CD8-positive, alpha-beta T cell (primary cell): ENCODE measurements at regions of chr1 and their contacts with region 1.

Region 1: DNA sequence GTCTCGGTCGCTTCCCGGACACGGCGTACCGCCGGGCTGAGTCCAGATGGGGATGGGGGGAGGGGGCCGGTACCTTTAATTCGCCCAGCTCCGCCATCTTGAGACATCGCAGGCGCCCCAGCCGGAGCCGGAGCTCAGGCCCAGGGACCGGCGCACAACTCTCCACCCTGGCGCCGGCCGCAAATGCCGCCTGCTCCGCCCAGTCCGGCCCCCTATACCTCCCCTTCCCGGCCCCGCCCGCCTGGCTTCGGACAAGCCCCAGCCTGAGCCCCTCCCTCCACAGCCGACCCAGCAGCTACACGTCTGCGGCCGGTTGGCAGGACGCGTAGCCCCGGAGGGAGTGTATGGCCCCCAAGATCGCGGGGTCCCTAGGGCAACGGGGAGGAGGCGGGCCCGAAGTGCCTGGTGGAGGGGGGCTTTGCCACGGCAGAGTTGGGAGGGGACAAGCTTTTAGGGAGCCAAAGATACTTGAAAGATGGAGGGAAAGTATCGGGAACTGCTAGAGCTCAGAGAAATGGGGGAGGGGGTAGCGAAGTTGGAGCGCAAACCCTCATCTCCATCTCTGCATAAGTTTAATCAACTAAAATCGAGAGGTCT is at the start of gene PIAS3:
- DNase-seq: peak; percentile 60 to 90 (median 78)
- ATAC-seq: peak; percentile 83
- H3K4me3 ChIP-seq: peak within 1 kb of the TSS; percentile 99 to 100
- H3K4me3 Mint-ChIP-seq: peak within 1 kb of the TSS; percentile 97
- H3K27ac ChIP-seq: peak within 1 kb of the TSS; percentile 64 to 65
- H3K27ac Mint-ChIP-seq: peak within 1 kb of the TSS; percentile 87
- H3K4me1 ChIP-seq: peaks cover 10% of the 10 kb centered on the region
- H3K4me1 Mint-ChIP-seq: peaks cover 17% of the 10 kb centered on the region
- H3K27me3 ChIP-seq: no peaks in the 10 kb centered on the region
- H3K27me3 Mint-ChIP-seq: no peaks in the 10 kb centered on the region
- CTCF ChIP-seq: no peak
- total RNA-seq, gene PIAS3: 16.3 to 16.6 TPM

Region 2: DNA sequence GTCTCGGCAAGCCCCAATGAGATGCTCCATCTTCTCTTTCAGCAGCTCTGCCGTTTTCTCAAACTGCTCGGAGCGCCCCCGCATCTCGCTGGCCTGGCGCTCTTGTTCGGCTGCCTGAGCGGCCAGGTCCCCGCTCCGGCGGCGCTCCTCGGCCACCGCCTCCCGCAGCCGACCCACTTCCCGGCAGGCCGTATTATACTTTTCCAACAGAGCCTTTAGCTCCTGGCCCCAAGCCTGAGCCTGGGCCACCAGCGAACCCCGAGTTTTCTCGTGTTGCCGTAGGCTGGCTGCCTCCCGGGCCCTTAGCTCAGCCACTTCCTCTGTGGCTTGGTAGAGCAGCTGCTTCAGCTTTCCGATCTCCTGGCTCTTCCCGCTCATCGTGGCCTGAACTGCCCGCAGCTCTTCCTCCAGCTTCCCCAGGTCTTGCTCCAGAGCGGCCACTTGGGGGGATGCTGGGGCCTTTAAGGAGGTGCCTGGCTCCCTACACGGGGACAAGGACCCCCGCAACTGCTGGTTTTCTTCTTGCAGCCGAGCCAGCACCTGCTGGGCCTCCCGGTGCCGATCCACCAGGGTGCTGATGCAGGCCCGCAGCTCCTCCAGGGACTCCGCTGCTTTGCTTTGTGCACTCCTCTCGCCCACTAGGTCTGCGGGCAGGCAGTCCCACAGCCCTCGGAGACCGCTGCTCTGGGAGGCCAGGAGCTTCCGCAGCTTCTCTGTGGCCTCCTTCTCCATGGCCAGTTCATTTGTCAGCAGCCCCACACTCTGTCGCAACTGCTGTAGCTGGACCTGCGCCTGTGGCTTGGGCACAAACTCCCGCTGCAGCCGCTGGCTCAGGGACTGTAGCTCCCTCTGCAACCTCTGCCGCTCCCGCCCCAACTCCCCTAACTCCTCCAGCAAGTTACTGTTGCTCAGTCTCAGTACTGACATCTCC is 13.3 kb after region 1 on chr1:
- CTCF ChIA-PET with region 1: interaction called, 8 read pairs
- POLR2A ChIA-PET with region 1: interaction called, 29 read pairs
- intact Hi-C with region 1: no loop called
- DNase-seq: peak in 8 of 9 experiments; percentile 12 to 75 (median 42)
- ATAC-seq: peak; percentile 76
- H3K4me3 ChIP-seq: peak overlapping the region; percentile 49 to 59
- H3K4me3 Mint-ChIP-seq: peak overlapping the region; percentile 81
- H3K27ac ChIP-seq: peak overlapping the region; percentile 1 to 38
- H3K27ac Mint-ChIP-seq: peak overlapping the region; percentile 69
- H3K4me1 ChIP-seq: peaks cover 13% of the 10 kb centered on the region
- H3K4me1 Mint-ChIP-seq: peaks cover 15% of the 10 kb centered on the region
- H3K27me3 ChIP-seq: no peaks in the 10 kb centered on the region
- H3K27me3 Mint-ChIP-seq: peaks cover 2% of the 10 kb centered on the region
- CTCF ChIP-seq: no peak

Region 3: DNA sequence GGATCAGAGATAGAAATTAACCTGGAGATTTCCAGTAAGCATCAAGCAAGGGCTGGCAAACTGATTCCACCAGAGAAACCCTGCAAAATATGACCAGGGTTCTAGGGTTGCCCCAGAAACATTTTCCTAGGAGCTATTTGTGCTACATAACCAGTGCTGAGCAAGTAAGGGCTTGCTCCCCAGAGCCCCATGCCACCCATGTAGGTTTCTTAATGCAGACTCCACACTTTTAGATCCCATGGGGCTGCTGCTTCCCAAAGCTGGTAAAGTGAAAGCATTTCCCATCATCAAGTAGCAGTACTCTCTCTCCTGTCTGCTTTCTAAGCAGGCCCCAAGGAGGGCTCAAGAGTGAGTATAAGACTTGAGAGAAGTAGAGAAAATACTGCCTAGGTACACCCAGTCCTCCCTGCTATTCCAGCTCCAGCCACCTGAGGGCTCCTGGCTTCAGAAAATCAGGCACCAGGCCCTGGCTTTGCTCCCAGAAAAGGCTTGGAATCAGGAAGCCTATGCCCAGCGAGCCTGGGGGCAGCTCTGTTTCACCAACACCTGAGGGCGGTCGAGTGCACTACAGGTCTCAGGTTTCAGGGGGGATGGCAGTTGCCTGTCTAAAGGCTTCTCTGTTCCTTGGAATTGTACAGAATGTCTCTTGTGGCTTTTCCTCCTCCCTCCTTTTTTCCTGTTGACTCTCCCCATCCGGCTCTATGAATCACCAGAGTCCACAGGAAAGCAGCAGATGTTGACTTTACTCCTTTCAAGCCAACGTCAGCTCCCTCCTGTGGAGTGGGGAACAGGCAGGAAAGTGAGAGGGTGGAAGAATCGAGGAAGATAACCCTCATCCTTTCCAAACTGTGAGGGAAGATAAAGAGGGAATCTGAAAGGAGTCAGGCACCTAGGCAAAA is 32.8 kb after region 1 on chr1:
- CTCF ChIA-PET with region 1: interaction called, 16 read pairs
- POLR2A ChIA-PET with region 1: interaction called, 21 read pairs
- intact Hi-C with region 1: no loop called
- DNase-seq: peak in 8 of 9 experiments; percentile 16 to 65 (median 54)
- ATAC-seq: peak; percentile 85
- H3K4me3 ChIP-seq: no peak overlapping the region
- H3K4me3 Mint-ChIP-seq: no peak overlapping the region
- H3K27ac ChIP-seq: no peak overlapping the region
- H3K27ac Mint-ChIP-seq: no peak overlapping the region
- H3K4me1 ChIP-seq: no peaks in the 10 kb centered on the region
- H3K4me1 Mint-ChIP-seq: peaks cover under 1% of the 10 kb centered on the region
- H3K27me3 ChIP-seq: no peaks in the 10 kb centered on the region
- H3K27me3 Mint-ChIP-seq: no peaks in the 10 kb centered on the region
- CTCF ChIP-seq: peak; percentile 69

Region 4: DNA sequence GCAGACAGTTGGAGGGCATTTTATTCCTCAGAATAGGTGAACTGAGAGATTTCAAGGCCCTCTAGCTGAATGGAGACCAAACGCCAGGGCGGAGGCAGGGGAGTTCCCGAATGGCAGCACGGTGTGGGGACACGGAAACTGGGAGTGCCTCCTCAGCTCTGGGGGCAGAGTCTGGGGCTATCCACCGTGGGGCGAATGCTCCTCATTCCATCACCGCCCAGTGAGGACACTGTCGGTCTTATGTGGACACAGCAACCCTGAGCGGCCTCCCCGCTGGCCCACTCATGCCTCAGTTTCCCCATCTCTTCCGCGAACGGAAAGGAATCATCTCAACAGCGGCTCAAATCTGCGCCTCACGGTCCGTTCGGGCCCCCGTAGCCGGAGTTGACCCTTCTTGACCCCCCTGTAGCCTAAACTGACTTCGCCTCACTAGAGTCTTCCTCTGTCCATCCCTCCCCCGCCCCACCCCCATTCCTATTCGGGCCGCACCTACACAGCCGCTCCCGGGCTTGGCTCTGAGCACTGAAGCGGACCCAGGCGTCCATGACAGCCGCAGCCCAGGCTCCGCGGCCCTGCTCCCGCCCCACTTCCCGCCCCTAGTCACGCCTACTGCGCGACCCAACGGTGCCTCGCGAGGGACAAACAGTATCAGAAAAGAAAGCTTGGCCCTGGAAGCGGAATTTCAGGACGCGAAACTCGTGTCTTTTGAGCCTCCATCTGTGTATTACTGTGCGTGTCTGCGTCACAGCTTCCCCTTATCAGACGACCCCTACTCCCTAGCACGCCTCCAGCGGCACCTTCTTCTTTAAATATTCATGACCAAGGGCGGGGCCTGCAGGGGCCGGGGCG is 59.4 kb after region 1 on chr1 and contains the start of gene PEX11B:
- CTCF ChIA-PET with region 1: interaction called, 3 read pairs
- POLR2A ChIA-PET with region 1: interaction called, 13 read pairs
- intact Hi-C with region 1: loop called (anchors 1 kb)
- DNase-seq: peak; percentile 87 to 96 (median 93)
- ATAC-seq: peak; percentile 91
- H3K4me3 ChIP-seq: peak within 1 kb of the TSS; percentile 88 to 96
- H3K4me3 Mint-ChIP-seq: peak within 1 kb of the TSS; percentile 90
- H3K27ac ChIP-seq: peak within 1 kb of the TSS; percentile 74 to 86
- H3K27ac Mint-ChIP-seq: peak within 1 kb of the TSS; percentile 96
- H3K4me1 ChIP-seq: peaks cover 24% of the 10 kb centered on the region
- H3K4me1 Mint-ChIP-seq: peaks cover 43% of the 10 kb centered on the region
- H3K27me3 ChIP-seq: no peaks in the 10 kb centered on the region
- H3K27me3 Mint-ChIP-seq: no peaks in the 10 kb centered on the region
- CTCF ChIP-seq: no peak
- total RNA-seq, gene PEX11B: 11.8 TPM

Region 5: GRCh38 chr1:145963995-145964901 is 105.3 kb after region 1 on chr1 and contains the starts of genes ANKRD34A and POLR3GL:
- CTCF ChIA-PET with region 1: interaction called, 4 read pairs
- POLR2A ChIA-PET with region 1: interaction called, 15 read pairs
- intact Hi-C with region 1: loop called (anchors 1 to 2 kb)
- DNase-seq: peak; percentile 77 to 95 (median 91)
- ATAC-seq: peak; percentile 88
- H3K4me3 ChIP-seq: peak within 1 kb of the TSS; percentile 87 to 92
- H3K4me3 Mint-ChIP-seq: peak within 1 kb of the TSS; percentile 98
- H3K27ac ChIP-seq: peak within 1 kb of the TSS; percentile 71 to 78
- H3K27ac Mint-ChIP-seq: peak within 1 kb of the TSS; percentile 98
- H3K4me1 ChIP-seq: peaks cover 32% of the 10 kb centered on the region
- H3K4me1 Mint-ChIP-seq: peaks cover 58% of the 10 kb centered on the region
- H3K27me3 ChIP-seq: no peaks in the 10 kb centered on the region
- H3K27me3 Mint-ChIP-seq: no peaks in the 10 kb centered on the region
- CTCF ChIP-seq: no peak
- total RNA-seq, gene ANKRD34A: 0.42 to 0.62 TPM
- total RNA-seq, gene POLR3GL: 12.9 to 14.4 TPM

Region 6: GRCh38 chr1:146036965-146037646 is 178.1 kb after region 1 on chr1:
- CTCF ChIA-PET with region 1: no interaction called
- POLR2A ChIA-PET with region 1: interaction called, 21 read pairs
- intact Hi-C with region 1: no loop called
- DNase-seq: peak; percentile 51 to 87 (median 70)
- ATAC-seq: peak; percentile 54
- H3K4me3 ChIP-seq: peak overlapping the region; percentile 72 to 94
- H3K4me3 Mint-ChIP-seq: peak overlapping the region; percentile 97
- H3K27ac ChIP-seq: peak overlapping the region; percentile 60 to 63
- H3K27ac Mint-ChIP-seq: peak overlapping the region; percentile 95
- H3K4me1 ChIP-seq: peaks cover 14% of the 10 kb centered on the region
- H3K4me1 Mint-ChIP-seq: peaks cover 29% of the 10 kb centered on the region
- H3K27me3 ChIP-seq: no peaks in the 10 kb centered on the region
- H3K27me3 Mint-ChIP-seq: no peaks in the 10 kb centered on the region
- CTCF ChIP-seq: no peak